ENCODE measurements at regions of chr10 and their contacts with region 1.

Region 1: DNA sequence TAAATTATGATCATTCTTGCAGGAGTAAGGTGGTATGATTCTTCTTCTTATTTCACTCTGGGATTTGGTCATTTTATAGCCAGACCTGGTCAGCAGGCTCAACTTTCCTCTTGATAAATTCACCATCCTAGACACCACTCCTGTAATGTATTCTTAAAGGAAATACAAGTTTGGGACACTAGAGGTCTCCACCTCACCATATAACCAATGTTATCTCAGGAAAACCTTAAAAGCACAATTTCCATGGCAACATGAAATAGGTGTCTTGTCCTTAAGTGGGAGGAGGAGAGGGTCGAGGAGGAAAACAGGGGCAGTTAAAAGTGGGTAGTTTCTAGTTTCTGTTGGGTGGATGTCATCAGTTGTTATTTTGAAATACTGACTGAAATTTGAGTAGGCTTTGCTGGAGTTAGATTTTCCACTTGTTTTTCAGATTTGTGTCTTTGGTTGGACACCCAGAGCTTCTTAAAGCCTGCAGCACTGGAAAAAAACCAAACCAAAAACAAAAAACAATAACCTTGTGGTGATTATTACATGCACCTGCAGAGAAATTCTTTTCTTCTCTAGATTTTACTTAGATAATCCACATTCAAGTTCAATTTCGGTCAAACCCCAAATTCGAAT is 163.1 kb downstream of the PRKCQ start:
- DNase-seq: peak; percentile 57
- ATAC-seq: peak; percentile 89
- H3K4me3 ChIP-seq: no peak overlapping the region
- H3K27ac ChIP-seq: no peak overlapping the region
- H3K4me1 ChIP-seq: no peaks in the 10 kb centered on the region
- H3K27me3 ChIP-seq: peaks cover 15% of the 10 kb centered on the region
- CTCF ChIP-seq: peak; percentile 78
- POLR2A ChIP-seq: no peak
- RAD21 ChIP-seq: peak; percentile 78

Region 2: DNA sequence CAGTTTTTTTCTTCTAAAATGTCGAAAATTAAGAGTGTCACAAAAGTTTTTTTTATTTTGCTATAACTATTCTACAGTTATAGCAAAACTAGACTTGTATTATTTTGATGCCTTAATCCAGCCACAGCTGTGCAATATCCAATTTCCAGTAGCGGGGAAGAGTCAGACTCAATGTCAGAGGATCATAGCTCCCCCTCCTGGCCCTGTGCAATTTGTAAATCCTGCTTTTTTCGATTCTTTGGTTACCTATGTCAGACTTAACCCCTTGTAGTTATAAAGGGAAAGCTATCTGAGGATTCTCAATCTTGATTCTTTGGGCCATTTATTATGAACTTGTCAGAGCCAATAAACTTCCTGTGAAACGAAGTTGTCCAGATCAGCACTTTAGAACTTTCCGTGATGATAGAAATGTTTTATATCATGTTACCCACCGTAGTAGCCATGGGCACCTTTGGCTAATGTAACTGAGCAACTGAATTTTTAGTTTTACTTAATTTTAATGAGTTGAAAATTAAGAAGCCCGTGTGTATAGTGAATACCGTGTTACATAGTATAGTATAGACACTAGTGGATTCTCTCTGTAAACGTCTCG is 250.8 kb after region 1 on chr10:
- CTCF ChIA-PET with region 1: interaction called, 3 read pairs
- POLR2A ChIA-PET with region 1: no interaction called
- dilution Hi-C with region 1: no loop called
- in situ Hi-C with region 1: loop called (anchors 5 kb)
- intact Hi-C with region 1: loop called (anchors 1 kb)
- DNase-seq: peak; percentile 43
- ATAC-seq: peak; percentile 85
- H3K4me3 ChIP-seq: no peak overlapping the region
- H3K27ac ChIP-seq: no peak overlapping the region
- H3K4me1 ChIP-seq: no peaks in the 10 kb centered on the region
- H3K27me3 ChIP-seq: no peaks in the 10 kb centered on the region; the same call in 1 of the 2 replicates
- CTCF ChIP-seq: peak; percentile 52
- POLR2A ChIP-seq: no peak
- RAD21 ChIP-seq: peak; percentile 47

Region 3: DNA sequence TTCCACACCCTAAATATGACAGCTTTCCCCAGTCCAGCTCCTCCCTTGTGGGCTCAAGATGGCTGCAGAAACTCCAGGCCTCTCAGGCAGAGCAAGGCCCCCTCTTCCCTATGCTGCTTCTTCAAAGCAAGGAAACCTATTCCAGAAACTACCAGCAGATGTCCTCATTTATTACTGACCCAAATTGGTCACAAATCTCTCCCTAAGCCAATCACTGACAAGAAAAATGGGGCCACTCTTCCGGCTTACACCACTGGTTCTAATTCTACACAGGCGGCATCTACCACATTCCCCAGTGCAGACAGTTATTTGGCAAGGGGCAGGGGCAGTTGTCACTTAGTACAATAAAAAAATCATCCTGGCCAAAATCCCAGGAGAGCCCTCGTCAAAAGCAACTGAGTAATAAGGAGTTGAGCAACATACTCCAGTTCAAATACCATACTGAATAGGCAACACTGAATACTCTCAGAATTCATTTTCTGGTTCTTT is 843.5 kb after region 1 on chr10:
- CTCF ChIA-PET with region 1: no interaction called
- POLR2A ChIA-PET with region 1: no interaction called
- dilution Hi-C with region 1: no loop called
- in situ Hi-C with region 1: no loop called
- intact Hi-C with region 1: loop called (anchors 10 kb)
- DNase-seq: peak; percentile 86
- ATAC-seq: peak; percentile 82
- H3K4me3 ChIP-seq: no peak overlapping the region
- H3K27ac ChIP-seq: peak overlapping the region; percentile 46; the same call in 1 of the 2 replicates
- H3K4me1 ChIP-seq: peaks cover 6% of the 10 kb centered on the region; the same call in 1 of the 2 replicates
- H3K27me3 ChIP-seq: no peaks in the 10 kb centered on the region
- CTCF ChIP-seq: peak; percentile 43
- POLR2A ChIP-seq: no peak
- RAD21 ChIP-seq: peak; percentile 25

Region 4: GRCh38 chr10:7687228-7687907 is 1270.4 kb after region 1 on chr10:
- CTCF ChIA-PET with region 1: no interaction called
- POLR2A ChIA-PET with region 1: no interaction called
- dilution Hi-C with region 1: no loop called
- in situ Hi-C with region 1: no loop called
- intact Hi-C with region 1: loop called (anchors 10 kb)
- DNase-seq: peak; percentile 85
- ATAC-seq: peak; percentile 96
- H3K4me3 ChIP-seq: no peak overlapping the region
- H3K27ac ChIP-seq: no peak overlapping the region
- H3K4me1 ChIP-seq: no peaks in the 10 kb centered on the region
- H3K27me3 ChIP-seq: no peaks in the 10 kb centered on the region; the same call in 1 of the 2 replicates
- CTCF ChIP-seq: peak; percentile 85
- POLR2A ChIP-seq: no peak
- RAD21 ChIP-seq: peak; percentile 70